CD4-positive, alpha-beta T cell (primary cell): ENCODE measurements at regions of chr1 and their contacts with region 1.

Region 1: DNA sequence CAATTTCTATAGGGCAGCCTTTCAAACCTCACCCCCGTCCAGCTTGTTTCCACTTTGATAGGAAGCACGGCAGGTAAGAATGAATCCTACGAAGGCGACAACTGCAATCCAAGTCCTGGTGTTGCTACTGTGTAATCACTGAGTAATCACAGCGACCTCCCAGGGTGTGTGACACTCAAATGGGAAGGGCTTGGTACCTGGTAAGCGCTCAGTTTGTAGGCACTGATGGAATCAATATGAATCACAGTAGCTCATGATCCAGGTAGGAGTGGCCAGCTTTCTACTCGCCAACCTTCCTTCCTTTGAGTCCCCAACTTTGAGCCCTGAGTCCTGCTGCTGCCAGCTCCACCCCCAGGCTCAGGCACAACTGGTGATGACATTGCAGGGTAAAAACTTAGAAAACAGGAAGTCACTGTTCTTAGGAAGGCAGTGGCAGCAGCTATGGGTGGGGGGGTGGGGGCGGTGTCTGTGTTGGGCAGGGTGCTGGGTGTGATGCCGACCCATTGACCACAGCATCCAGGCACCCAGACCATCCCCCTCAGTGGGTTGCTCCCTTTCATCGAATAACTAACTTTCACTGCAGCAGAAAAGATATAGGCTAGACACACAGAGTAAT is 70.7 kb downstream of the CD247 start:
- DNase-seq: peak; percentile 49 to 92 (median 68)
- ATAC-seq: peak; percentile 84
- H3K4me3 ChIP-seq: peak overlapping the region; percentile 37
- H3K4me3 Mint-ChIP-seq: peak overlapping the region; percentile 91
- H3K27ac ChIP-seq: peak overlapping the region; percentile 84 to 89
- H3K27ac Mint-ChIP-seq: peak overlapping the region; percentile 100
- H3K4me1 ChIP-seq: peaks cover 94% of the 10 kb centered on the region
- H3K4me1 Mint-ChIP-seq: peaks cover 85% of the 10 kb centered on the region
- H3K27me3 ChIP-seq: no peaks in the 10 kb centered on the region
- H3K27me3 Mint-ChIP-seq: no peaks in the 10 kb centered on the region
- CTCF ChIP-seq: no peak

Region 2: DNA sequence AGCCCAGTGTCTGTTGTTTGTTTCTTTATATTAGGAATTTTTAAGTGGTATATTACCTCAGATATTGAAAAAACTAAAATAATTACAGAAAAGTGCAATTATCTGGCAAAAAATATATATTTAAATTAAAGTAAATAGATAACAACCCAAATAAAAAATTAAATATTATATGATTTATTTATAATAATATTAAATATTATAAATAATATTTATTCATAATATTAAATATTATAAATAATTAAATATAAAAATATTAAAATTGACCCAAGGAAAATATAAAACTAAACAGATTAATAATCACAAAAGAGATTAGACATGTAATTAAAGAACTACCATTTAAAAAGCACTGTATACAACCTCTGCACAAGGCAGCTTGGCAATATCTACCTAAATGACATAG is 940.3 kb before region 1 on chr1:
- CTCF ChIA-PET with region 1: no interaction called
- POLR2A ChIA-PET with region 1: no interaction called
- intact Hi-C with region 1: no loop called
- DNase-seq: no peak
- ATAC-seq: no peak
- H3K4me3 ChIP-seq: no peak overlapping the region
- H3K4me3 Mint-ChIP-seq: no peak overlapping the region
- H3K27ac ChIP-seq: no peak overlapping the region
- H3K27ac Mint-ChIP-seq: no peak overlapping the region
- H3K4me1 ChIP-seq: no peaks in the 10 kb centered on the region
- H3K4me1 Mint-ChIP-seq: no peaks in the 10 kb centered on the region
- H3K27me3 ChIP-seq: no peaks in the 10 kb centered on the region
- H3K27me3 Mint-ChIP-seq: no peaks in the 10 kb centered on the region
- CTCF ChIP-seq: no peak

Region 3: DNA sequence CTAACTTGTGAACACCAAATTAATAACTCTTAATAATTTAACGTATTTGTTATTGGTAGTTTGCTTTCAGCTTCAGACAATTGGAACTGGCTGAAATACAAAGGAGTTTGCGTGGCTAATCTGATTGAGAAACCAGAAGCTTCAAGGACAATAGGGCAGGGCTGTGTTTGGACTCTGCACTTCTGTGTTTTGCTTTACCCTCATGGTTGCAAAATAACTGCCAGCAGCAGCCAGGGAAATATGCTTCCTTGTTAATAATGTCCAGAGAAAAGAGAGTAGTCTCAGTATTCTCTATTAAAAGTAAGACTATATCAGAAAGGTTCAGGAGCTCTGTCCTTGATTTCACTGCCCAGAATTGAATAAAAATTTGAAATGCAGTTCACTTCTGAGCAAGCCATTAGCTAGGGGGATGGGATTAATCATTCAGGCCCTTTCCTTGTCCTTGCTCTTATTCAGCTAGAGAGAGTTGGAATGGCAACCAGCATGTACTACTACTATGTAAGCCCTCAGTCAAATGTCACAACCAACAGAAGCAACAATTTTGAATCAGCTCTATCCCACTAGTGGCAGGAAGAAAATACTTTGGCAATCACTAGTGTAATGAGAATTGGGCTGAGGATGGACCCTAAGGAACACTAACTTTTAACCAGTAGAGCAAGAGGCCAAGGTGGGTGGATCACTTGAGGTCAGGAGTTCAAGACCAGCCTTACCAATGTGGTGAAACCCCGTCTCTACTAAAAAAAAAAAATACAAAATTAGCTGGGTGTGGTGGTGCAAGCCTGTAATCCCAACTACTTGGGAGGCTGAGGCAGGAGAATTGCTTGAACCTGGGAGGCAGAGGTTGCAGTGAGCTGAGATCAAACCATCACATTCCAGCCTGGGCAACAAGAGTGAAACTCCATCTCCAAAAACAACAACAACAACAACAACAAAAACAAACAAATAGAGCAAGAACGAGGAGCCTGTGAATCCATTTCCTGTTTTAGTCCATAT is 150.1 kb before region 1 on chr1:
- CTCF ChIA-PET with region 1: no interaction called
- POLR2A ChIA-PET with region 1: no interaction called
- intact Hi-C with region 1: no loop called
- DNase-seq: peak in 2 of 14 experiments; percentile 4 to 7
- ATAC-seq: no peak
- H3K4me3 ChIP-seq: no peak overlapping the region
- H3K4me3 Mint-ChIP-seq: no peak overlapping the region
- H3K27ac ChIP-seq: no peak overlapping the region
- H3K27ac Mint-ChIP-seq: no peak overlapping the region
- H3K4me1 ChIP-seq: no peaks in the 10 kb centered on the region
- H3K4me1 Mint-ChIP-seq: peaks cover 32% of the 10 kb centered on the region
- H3K27me3 ChIP-seq: no peaks in the 10 kb centered on the region
- H3K27me3 Mint-ChIP-seq: no peaks in the 10 kb centered on the region
- CTCF ChIP-seq: no peak

Region 4: GRCh38 chr1:167460836-167461235 is 13.2 kb after region 1 on chr1:
- CTCF ChIA-PET with region 1: interaction called, 9 read pairs
- POLR2A ChIA-PET with region 1: interaction called, 36 read pairs
- intact Hi-C with region 1: loop called in 1 of 2 experiments (anchors 2 kb)
- DNase-seq: peak in 12 of 14 experiments; percentile 30 to 90 (median 58)
- ATAC-seq: peak; percentile 82
- H3K4me3 ChIP-seq: no peak overlapping the region
- H3K4me3 Mint-ChIP-seq: peak overlapping the region; percentile 65
- H3K27ac ChIP-seq: peak overlapping the region; percentile 68 to 69
- H3K27ac Mint-ChIP-seq: peak overlapping the region; percentile 100
- H3K4me1 ChIP-seq: peaks cover 91% of the 10 kb centered on the region
- H3K4me1 Mint-ChIP-seq: peaks cover 90% of the 10 kb centered on the region
- H3K27me3 ChIP-seq: no peaks in the 10 kb centered on the region
- H3K27me3 Mint-ChIP-seq: no peaks in the 10 kb centered on the region
- CTCF ChIP-seq: no peak

Region 5: GRCh38 chr1:167491586-167492461 is 44.2 kb after region 1 on chr1:
- CTCF ChIA-PET with region 1: interaction called, 7 read pairs
- POLR2A ChIA-PET with region 1: interaction called, 10 read pairs
- intact Hi-C with region 1: no loop called
- DNase-seq: peak in 3 of 14 experiments; percentile 61 to 72 (median 71)
- ATAC-seq: peak; percentile 35
- H3K4me3 ChIP-seq: peak overlapping the region; percentile 32
- H3K4me3 Mint-ChIP-seq: peak overlapping the region; percentile 74
- H3K27ac ChIP-seq: peak overlapping the region; percentile 76 to 89
- H3K27ac Mint-ChIP-seq: peak overlapping the region; percentile 100
- H3K4me1 ChIP-seq: peaks cover 98% of the 10 kb centered on the region
- H3K4me1 Mint-ChIP-seq: peaks cover 99% of the 10 kb centered on the region
- H3K27me3 ChIP-seq: no peaks in the 10 kb centered on the region
- H3K27me3 Mint-ChIP-seq: no peaks in the 10 kb centered on the region
- CTCF ChIP-seq: no peak

Region 6: DNA sequence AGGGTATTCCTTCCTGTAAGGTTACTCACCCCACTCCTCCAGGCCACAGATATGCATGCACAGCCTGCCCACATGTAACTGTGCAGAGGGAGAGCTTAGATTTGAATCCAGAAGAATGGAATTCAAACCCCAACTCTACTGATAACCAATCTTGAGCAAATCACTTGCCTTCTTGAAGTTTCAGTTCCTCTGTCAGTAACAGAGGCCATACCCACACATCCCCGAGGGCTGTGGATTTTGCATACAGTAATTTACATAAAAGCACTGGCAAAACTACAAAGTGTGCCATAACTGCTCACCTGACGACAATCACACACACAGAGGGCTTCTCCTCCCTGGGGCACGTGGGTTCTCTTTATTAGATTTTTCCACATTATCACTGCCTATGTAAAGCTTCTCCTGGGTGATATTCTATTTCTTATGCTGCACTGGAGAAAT is 52.1 kb after region 1 on chr1:
- CTCF ChIA-PET with region 1: no interaction called
- POLR2A ChIA-PET with region 1: interaction called, 11 read pairs
- intact Hi-C with region 1: no loop called
- DNase-seq: peak in 4 of 14 experiments; percentile 34 to 70 (median 52)
- ATAC-seq: peak; percentile 68
- H3K4me3 ChIP-seq: no peak overlapping the region
- H3K4me3 Mint-ChIP-seq: peak overlapping the region; percentile 47
- H3K27ac ChIP-seq: peak overlapping the region; percentile 26 to 29
- H3K27ac Mint-ChIP-seq: peak overlapping the region; percentile 100
- H3K4me1 ChIP-seq: peaks cover 96% of the 10 kb centered on the region
- H3K4me1 Mint-ChIP-seq: peaks cover 99% of the 10 kb centered on the region
- H3K27me3 ChIP-seq: no peaks in the 10 kb centered on the region
- H3K27me3 Mint-ChIP-seq: no peaks in the 10 kb centered on the region
- CTCF ChIP-seq: no peak